Naive thymus-derived CD4-positive, alpha-beta T cell (primary cell): ENCODE measurements at regions of chr2 and their contacts with region 1.

Region 1: DNA sequence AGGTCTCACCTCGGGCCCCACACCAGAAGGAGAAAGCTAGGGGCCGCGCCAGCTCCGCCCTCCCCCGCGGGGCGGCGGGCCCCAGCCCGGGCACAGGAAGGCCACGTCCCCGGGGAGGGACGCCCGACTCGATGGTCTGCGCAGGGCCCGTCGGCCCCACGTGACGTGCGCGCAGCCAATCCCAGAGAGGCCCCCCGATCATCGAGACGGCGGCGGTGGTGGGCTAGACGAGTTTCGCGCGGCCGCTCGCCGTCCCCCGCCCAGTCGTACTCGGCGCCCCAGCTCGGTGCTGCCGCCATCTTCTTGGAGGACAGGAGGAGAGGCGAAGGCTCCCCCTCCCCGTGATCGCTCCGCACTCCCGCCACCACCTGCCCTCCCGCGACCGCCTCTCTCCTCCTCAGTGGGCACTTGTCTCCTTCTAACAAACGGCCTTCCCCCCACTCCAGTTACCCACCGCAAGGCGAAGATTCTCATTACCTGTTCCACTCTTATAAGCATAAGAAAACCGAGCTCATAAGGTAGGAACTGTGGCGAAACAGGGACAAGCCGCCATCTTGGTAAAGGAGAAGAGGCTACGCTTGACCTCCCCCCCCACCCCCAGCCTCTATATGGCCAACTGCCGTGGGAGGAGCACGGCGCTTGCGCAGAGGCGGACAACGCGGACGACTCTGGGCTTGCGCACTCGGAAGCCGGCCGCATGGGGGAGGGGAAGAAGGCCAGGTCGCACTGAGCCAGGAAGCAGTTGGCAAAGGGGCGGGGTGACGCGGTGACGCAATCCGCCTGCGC is at the start of gene HDLBP:
- DNase-seq: peak; percentile 100
- ATAC-seq: peak; percentile 87
- H3K4me3 ChIP-seq: peak within 1 kb of the TSS; percentile 98
- H3K4me3 Mint-ChIP-seq: peak within 1 kb of the TSS; percentile 93 to 100 (median 98)
- H3K27ac ChIP-seq: peak within 1 kb of the TSS; percentile 95
- H3K27ac Mint-ChIP-seq: peak within 1 kb of the TSS; percentile 96 to 100 (median 99)
- H3K4me1 ChIP-seq: peaks cover 44 to 48% of the 10 kb centered on the region in 2 donors
- H3K4me1 Mint-ChIP-seq: peaks cover 62 to 84% (median 75%) of the 10 kb centered on the region in 7 donors
- H3K27me3 ChIP-seq: no peaks in the 10 kb centered on the region
- H3K27me3 Mint-ChIP-seq: no peaks in the 10 kb centered on the region
- total RNA-seq, gene HDLBP: 127 to 231 (median 169) TPM

Region 2: GRCh38 chr2:240586198-240586918 is 728.9 kb before region 1 on chr2 and contains the start of gene CAPN10:
- CTCF ChIA-PET with region 1: no interaction called
- POLR2A ChIA-PET with region 1: no interaction called
- intact Hi-C with region 1: loop called in 1 of 2 experiments (anchors 1 kb)
- DNase-seq: peak; percentile 93 to 98 (median 97)
- ATAC-seq: peak; percentile 92
- H3K4me3 ChIP-seq: peak within 1 kb of the TSS; percentile 89
- H3K4me3 Mint-ChIP-seq: peak within 1 kb of the TSS; percentile 82 to 97 (median 94)
- H3K27ac ChIP-seq: peak within 1 kb of the TSS; percentile 94
- H3K27ac Mint-ChIP-seq: peak within 1 kb of the TSS; percentile 90 to 97 (median 92)
- H3K4me1 ChIP-seq: peaks cover 30 to 33% of the 10 kb centered on the region in 2 donors
- H3K4me1 Mint-ChIP-seq: peaks cover 31 to 69% (median 56%) of the 10 kb centered on the region in 7 donors
- H3K27me3 ChIP-seq: no peaks in the 10 kb centered on the region
- H3K27me3 Mint-ChIP-seq: no peaks in the 10 kb centered on the region
- total RNA-seq, gene CAPN10: 54.1 to 74.8 (median 64.5) TPM

Region 3: GRCh38 chr2:241149925-241150659 is 165.2 kb before region 1 on chr2 and contains the start of gene PPP1R7:
- CTCF ChIA-PET with region 1: no interaction called
- POLR2A ChIA-PET with region 1: interaction called, 6 read pairs
- intact Hi-C with region 1: loop called (anchors 1 kb)
- DNase-seq: peak; percentile 83 to 96 (median 93)
- ATAC-seq: peak; percentile 87
- H3K4me3 ChIP-seq: peak within 1 kb of the TSS; percentile 97
- H3K4me3 Mint-ChIP-seq: peak within 1 kb of the TSS; percentile 95 to 100 (median 98)
- H3K27ac ChIP-seq: peak within 1 kb of the TSS; percentile 71
- H3K27ac Mint-ChIP-seq: peak within 1 kb of the TSS; percentile 85 to 97 (median 94)
- H3K4me1 ChIP-seq: peaks cover 13 to 26% of the 10 kb centered on the region in 2 donors
- H3K4me1 Mint-ChIP-seq: peaks cover 33 to 58% (median 51%) of the 10 kb centered on the region in 7 donors
- H3K27me3 ChIP-seq: no peaks in the 10 kb centered on the region
- H3K27me3 Mint-ChIP-seq: no peaks in the 10 kb centered on the region
- total RNA-seq, gene PPP1R7: 39.2 to 105 (median 55.3) TPM

Region 4: DNA sequence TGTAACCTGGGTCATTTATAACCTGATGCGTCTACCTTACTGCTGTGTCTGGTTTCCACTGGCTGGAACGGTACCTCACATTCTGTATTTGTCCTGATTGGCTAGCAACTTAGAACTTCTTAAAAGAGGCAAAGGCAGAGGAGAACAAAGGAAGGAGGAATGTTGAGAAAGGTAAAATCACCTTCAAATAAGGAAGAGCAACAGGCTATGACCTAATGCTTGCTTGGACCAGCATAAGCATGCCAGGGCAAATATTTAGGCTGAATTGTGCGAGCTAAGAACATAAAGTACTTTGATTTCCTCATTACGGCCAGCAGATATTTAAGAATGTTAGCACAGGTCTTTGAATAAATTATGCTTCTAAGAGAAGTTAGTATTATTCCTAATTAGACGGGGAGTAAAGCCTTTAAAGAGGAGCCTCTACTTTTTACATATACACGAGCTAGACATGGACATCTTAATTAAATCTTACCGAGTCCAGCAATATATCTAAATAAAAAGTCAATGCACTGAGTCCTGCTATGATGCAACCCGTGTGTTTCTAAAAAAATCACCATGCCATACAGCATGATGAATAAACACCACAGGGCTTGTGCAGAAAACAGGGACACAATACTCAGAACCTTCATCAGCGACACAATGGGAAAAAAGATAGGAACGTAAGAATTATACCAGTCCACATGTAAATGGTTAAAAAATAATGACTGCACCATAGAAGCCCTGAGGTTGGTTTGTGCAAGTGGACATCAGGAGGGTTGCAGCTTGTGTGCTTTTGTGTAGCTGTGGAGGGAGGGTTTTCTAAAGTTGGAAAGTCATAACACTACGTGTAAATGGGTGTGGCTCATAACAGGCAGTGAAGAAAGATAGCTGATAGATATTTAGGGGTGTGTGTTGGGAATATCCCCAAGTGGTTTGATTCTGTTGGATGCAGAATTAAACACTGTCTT is 14.7 kb after region 1 on chr2:
- CTCF ChIA-PET with region 1: interaction called, 3 read pairs
- POLR2A ChIA-PET with region 1: interaction called, 4 read pairs
- intact Hi-C with region 1: loop called in 1 of 2 experiments (anchors 2 kb)
- DNase-seq: no peak
- ATAC-seq: no peak
- H3K4me3 ChIP-seq: no peak overlapping the region
- H3K4me3 Mint-ChIP-seq: no peak overlapping the region
- H3K27ac ChIP-seq: no peak overlapping the region
- H3K27ac Mint-ChIP-seq: peak overlapping the region in 1 of 9 donors; percentile 9
- H3K4me1 ChIP-seq: no peaks in the 10 kb centered on the region
- H3K4me1 Mint-ChIP-seq: peaks cover 8 to 35% (median 13%) of the 10 kb centered on the region in 7 donors
- H3K27me3 ChIP-seq: no peaks in the 10 kb centered on the region
- H3K27me3 Mint-ChIP-seq: no peaks in the 10 kb centered on the region

Region 5: DNA sequence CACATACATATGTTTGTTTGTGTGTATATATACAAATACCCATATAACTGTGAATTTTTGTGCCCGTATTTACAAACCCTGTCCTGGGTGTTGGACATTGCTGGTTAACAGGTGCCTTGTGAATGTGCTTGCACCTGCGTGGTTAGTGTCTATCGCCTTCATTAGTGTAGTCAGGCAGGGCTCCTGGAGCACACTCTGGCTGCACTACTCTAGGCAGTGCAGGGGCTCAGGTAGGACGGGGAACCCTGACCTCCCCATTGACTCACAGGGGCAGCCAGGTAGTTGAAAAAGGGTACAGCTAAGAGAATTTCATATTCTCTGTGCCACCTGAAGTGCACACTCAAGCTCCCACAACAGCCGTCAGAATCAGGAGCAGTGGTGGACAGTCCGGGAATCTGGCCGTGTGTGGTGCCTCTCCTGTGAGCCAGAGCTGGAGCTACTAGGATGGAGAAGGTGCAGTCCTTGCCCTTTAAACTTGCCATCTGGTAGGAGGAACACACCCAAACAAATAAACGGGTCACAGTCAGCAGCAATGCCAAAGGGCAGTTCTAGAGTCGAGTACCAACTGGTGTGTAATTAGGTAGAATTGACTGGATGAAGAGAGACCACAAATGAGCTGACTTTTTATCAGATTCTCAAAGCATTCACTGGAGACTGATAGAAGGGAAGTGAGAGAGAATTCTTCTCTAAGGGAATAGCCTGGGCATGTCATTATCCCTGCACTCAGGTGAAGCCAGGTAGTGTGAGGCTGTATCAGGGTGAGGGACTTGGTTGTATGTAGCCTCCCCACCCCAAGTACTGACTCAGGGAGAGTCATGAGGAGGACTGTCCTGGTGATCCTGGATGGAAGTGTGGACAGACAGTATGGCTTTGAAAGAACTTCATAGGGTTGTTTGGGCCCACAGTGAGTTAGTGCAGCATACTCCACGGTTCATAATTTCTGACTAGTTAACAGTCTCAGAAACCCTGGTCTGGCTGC is 84.9 kb after region 1 on chr2:
- CTCF ChIA-PET with region 1: no interaction called
- POLR2A ChIA-PET with region 1: no interaction called
- intact Hi-C with region 1: no loop called
- DNase-seq: no peak
- ATAC-seq: no peak
- H3K4me3 ChIP-seq: no peak overlapping the region
- H3K4me3 Mint-ChIP-seq: no peak overlapping the region
- H3K27ac ChIP-seq: no peak overlapping the region
- H3K27ac Mint-ChIP-seq: peak overlapping the region in 1 of 9 donors; percentile 44
- H3K4me1 ChIP-seq: no peaks in the 10 kb centered on the region
- H3K4me1 Mint-ChIP-seq: no peaks in the 10 kb centered on the region
- H3K27me3 ChIP-seq: no peaks in the 10 kb centered on the region
- H3K27me3 Mint-ChIP-seq: no peaks in the 10 kb centered on the region

Region 6: DNA sequence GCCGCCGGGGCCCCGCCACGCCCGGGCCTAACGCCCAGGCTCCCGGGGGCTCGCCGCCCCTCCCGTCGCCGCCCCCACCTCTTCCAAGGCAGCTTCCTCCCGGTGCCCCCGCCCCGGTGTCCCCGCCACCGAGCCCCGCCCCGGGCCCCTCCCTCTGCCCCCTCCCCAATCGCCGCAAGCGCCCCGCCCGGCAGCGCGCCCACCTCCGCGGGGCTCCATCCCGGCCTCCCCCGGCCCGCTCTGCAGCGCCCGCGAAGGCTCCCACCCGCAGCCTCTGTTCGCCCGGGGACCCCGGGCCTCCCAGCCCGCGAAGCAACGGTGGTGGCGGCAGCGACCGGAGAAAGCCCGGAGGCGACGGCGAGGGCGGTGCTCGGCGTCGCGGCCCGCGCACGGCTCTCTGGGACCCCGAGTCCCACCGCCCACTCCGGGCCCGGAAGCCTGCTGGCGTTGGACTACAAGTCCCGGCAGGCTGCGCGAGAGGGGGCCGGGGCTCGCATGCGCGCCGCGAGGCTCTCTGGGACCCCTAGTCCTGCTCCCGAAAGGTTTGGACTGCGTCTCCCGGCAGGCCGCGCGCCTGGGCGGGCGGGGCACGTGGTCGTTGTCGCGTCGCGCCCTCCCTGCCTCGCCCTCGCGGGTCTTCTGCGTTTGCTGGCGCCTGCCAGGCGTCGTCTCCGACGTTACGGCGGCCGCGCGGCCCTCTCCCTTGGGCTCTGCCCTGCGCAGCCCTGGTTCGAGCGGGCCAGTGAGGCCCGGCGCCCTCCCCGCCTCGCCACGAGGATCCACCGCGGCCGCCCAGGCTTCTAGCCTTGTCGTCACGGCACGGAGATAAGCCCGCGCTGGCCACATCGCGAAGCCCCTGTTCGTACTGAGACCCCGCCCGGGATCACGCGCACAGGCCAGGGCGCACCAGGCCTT is 193.2 kb after region 1 on chr2 and contains the start of gene STK25:
- CTCF ChIA-PET with region 1: no interaction called
- POLR2A ChIA-PET with region 1: interaction called, 4 read pairs
- intact Hi-C with region 1: loop called in 1 of 2 experiments (anchors 1 kb)
- DNase-seq: peak; percentile 93 to 98 (median 97)
- ATAC-seq: peak; percentile 96
- H3K4me3 ChIP-seq: peak within 1 kb of the TSS; percentile 70
- H3K4me3 Mint-ChIP-seq: peak within 1 kb of the TSS; percentile 80 to 92 (median 86)
- H3K27ac ChIP-seq: peak within 1 kb of the TSS; percentile 81
- H3K27ac Mint-ChIP-seq: peak within 1 kb of the TSS; percentile 67 to 91 (median 85)
- H3K4me1 ChIP-seq: peaks cover 7 to 16% of the 10 kb centered on the region in 2 donors
- H3K4me1 Mint-ChIP-seq: peaks cover 17 to 33% (median 24%) of the 10 kb centered on the region in 7 donors
- H3K27me3 ChIP-seq: no peaks in the 10 kb centered on the region
- H3K27me3 Mint-ChIP-seq: peaks cover 0 to 1% (median 0%) of the 10 kb centered on the region in 5 donors
- total RNA-seq, gene STK25: 90.8 to 170 (median 115) TPM

Region 7: GRCh38 chr2:241546771-241547498 is 231.6 kb after region 1 on chr2:
- CTCF ChIA-PET with region 1: no interaction called
- POLR2A ChIA-PET with region 1: no interaction called
- intact Hi-C with region 1: no loop called
- DNase-seq: no peak
- ATAC-seq: no peak
- H3K4me3 ChIP-seq: no peak overlapping the region
- H3K4me3 Mint-ChIP-seq: no peak overlapping the region
- H3K27ac ChIP-seq: no peak overlapping the region
- H3K27ac Mint-ChIP-seq: no peak overlapping the region
- H3K4me1 ChIP-seq: no peaks in the 10 kb centered on the region
- H3K4me1 Mint-ChIP-seq: peaks cover 0 to 3% (median 0%) of the 10 kb centered on the region in 7 donors
- H3K27me3 ChIP-seq: peaks cover 3% of the 10 kb centered on the region in 2 donors
- H3K27me3 Mint-ChIP-seq: peaks cover 12 to 23% (median 22%) of the 10 kb centered on the region in 5 donors

Region 8: GRCh38 chr2:241637000-241637791 is 321.9 kb after region 1 on chr2 and contains the starts of genes ATG4B and THAP4:
- CTCF ChIA-PET with region 1: no interaction called
- POLR2A ChIA-PET with region 1: interaction called, 6 read pairs
- intact Hi-C with region 1: loop called (anchors 1 kb)
- DNase-seq: peak; percentile 61 to 89 (median 79)
- ATAC-seq: peak; percentile 82
- H3K4me3 ChIP-seq: peak within 1 kb of the TSS; percentile 99
- H3K4me3 Mint-ChIP-seq: peak within 1 kb of the TSS; percentile 85 to 98 (median 92)
- H3K27ac ChIP-seq: peak within 1 kb of the TSS; percentile 99
- H3K27ac Mint-ChIP-seq: peak within 1 kb of the TSS; percentile 48 to 98 (median 94)
- H3K4me1 ChIP-seq: peaks cover 26 to 27% of the 10 kb centered on the region in 2 donors
- H3K4me1 Mint-ChIP-seq: peaks cover 43 to 63% (median 55%) of the 10 kb centered on the region in 7 donors
- H3K27me3 ChIP-seq: no peaks in the 10 kb centered on the region
- H3K27me3 Mint-ChIP-seq: no peaks in the 10 kb centered on the region
- total RNA-seq, gene ATG4B: 87.2 to 131 (median 95.0) TPM
- total RNA-seq, gene THAP4: 26.4 to 34.8 (median 28.1) TPM

Region 9: GRCh38 chr2:241724259-241724974 is 409.1 kb after region 1 on chr2:
- CTCF ChIA-PET with region 1: no interaction called
- POLR2A ChIA-PET with region 1: no interaction called
- intact Hi-C with region 1: no loop called
- DNase-seq: peak in 1 of 9 donors; percentile 32
- ATAC-seq: no peak
- H3K4me3 ChIP-seq: no peak overlapping the region
- H3K4me3 Mint-ChIP-seq: no peak overlapping the region
- H3K27ac ChIP-seq: no peak overlapping the region
- H3K27ac Mint-ChIP-seq: no peak overlapping the region
- H3K4me1 ChIP-seq: no peaks in the 10 kb centered on the region
- H3K4me1 Mint-ChIP-seq: peaks cover 0 to 4% (median 0%) of the 10 kb centered on the region in 7 donors
- H3K27me3 ChIP-seq: no peaks in the 10 kb centered on the region
- H3K27me3 Mint-ChIP-seq: no peaks in the 10 kb centered on the region

Region 10: DNA sequence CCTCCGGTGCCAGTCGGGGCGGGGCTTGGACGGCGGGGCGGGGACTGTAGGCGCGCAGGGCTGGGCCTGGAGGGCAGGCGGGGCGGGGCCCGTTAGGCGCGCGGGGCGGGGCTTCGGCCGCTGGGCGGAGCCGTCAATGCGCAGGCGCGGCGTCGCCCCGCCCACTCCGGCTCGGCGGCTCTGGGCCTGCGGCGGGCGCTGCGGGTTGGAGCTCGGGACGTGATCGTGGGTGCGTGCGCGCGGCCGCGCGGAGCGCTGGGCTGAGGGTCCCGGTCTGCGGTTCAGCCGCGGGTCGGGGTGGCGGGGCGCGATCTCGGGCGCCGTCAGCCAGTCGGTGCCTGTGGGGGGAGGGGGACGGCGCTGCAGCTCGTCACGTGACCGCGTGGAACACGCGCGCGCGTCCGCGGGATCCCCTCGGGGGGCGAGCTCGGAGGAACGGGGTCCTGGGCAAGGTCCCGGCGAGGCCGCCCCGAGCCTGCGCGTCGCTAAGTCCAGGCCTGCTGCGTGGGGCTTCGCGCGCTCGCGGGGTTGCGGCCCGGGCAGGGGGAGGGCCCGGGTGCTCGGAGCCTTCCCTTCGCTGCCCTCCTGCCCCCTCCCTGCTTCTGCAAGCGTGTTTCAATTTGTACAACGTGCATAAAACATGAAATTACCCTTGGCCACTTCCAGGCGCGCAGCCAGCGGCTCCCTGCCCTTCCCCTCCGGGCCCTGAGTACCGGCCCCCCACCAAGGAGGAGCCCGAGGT is 419.4 kb after region 1 on chr2 and contains the start of gene D2HGDH:
- CTCF ChIA-PET with region 1: no interaction called
- POLR2A ChIA-PET with region 1: no interaction called
- intact Hi-C with region 1: loop called in 1 of 2 experiments (anchors 1 kb)
- DNase-seq: peak; percentile 85 to 99 (median 91)
- ATAC-seq: peak; percentile 98
- H3K4me3 ChIP-seq: peak within 1 kb of the TSS; percentile 88
- H3K4me3 Mint-ChIP-seq: peak within 1 kb of the TSS; percentile 79 to 89 (median 84)
- H3K27ac ChIP-seq: peak within 1 kb of the TSS; percentile 75
- H3K27ac Mint-ChIP-seq: peak within 1 kb of the TSS in 8 of 9 donors; percentile 40 to 79 (median 72)
- H3K4me1 ChIP-seq: peaks cover 9% of the 10 kb centered on the region in 2 donors
- H3K4me1 Mint-ChIP-seq: peaks cover 9 to 54% (median 43%) of the 10 kb centered on the region in 7 donors
- H3K27me3 ChIP-seq: no peaks in the 10 kb centered on the region
- H3K27me3 Mint-ChIP-seq: no peaks in the 10 kb centered on the region
- total RNA-seq, gene D2HGDH: 32.5 to 49.8 (median 41.1) TPM